ENCODE measurements at regions of chr14 and their contacts with region 1.

Region 1: DNA sequence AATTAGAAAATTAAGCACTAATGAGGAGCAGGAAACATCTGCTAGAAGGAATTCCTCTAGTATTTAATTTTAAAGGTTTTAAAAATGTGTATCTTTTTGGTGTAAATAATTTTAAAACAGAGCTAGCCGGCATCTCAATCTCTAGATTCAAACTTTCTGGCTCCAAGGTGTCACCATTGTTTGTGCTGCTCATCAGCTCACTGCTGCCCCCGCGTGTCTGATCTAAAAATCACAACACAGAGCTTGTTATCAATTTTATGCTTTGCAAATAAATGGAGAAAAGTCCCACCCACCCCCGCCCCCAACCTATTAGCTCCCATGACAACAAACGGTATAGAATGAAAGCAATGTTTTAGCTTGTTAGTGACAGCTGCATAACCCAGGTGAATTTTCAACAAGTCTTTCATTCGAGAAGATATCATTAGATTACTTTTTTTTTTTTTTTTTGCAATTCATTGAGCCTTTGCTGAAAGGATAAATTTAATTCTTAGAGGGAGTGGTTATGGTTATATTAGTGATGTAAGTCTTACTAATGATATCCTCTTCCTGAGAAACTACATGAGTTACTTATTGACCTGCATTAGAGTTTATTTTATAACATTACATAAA is 11.3 kb upstream of the ABHD12B start:
- DNase-seq: peak; percentile 80 to 90 (median 86)
- ATAC-seq: peak; percentile 90
- H3K4me3 ChIP-seq: peak overlapping the region; percentile 84
- H3K4me3 Mint-ChIP-seq: peak overlapping the region; percentile 89 to 95 (median 92)
- H3K27ac ChIP-seq: peak overlapping the region; percentile 56
- H3K27ac Mint-ChIP-seq: peak overlapping the region; percentile 83 to 95 (median 88)
- H3K4me1 ChIP-seq: peaks cover 7% of the 10 kb centered on the region in 2 donors
- H3K4me1 Mint-ChIP-seq: peaks cover 3 to 23% (median 11%) of the 10 kb centered on the region in 7 donors
- H3K27me3 ChIP-seq: no peaks in the 10 kb centered on the region
- H3K27me3 Mint-ChIP-seq: peaks cover 0 to 33% (median 2%) of the 10 kb centered on the region in 5 donors

Region 2: DNA sequence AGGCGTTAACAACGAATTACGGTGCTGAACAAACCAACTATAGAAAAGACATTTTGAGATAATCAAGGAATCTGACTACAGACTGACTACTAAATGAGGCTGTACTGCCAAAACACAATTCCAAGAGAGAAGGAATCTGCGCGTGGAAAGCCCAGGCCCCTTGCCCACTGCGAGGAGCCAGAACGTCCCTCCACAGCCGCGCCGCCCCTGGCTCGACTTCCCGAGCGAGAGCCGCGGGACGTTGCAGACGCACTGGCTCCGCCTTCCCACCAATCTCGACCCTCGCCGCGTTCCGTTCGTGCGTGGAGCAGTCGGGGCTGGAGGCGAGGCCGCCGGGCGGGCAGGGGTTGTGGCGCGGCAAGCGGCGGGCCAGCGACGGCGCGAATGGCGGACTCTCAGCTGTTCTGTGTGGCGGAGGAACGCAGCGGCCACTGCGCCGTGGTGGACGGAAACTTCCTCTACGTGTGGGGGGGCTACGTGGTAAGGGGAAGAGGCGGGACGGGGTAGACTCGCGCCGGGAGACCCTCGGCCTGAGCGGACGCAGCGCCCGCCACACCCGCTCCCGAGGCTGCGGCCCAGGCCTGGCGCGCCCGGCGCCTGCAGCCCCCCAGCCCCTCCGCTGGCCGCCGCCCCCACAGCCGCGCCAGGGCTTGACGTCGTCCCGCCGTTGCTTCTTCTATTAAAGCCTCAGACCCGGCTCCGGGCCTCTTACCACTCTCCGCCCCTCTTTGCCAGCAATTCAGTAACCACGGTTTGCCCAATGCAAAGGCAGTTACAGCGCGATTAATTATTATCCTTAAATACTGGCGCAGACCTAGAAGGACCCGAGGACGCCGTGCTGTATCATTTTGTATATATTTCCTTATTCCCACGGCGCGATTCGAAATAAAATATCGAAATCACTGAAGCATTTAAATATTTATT is 1167.5 kb before region 1 on chr14 and contains the start of gene KLHDC1:
- CTCF ChIA-PET with region 1: no interaction called
- POLR2A ChIA-PET with region 1: no interaction called
- intact Hi-C with region 1: no loop called
- DNase-seq: peak; percentile 70 to 84 (median 80)
- ATAC-seq: peak; percentile 89
- H3K4me3 ChIP-seq: peak within 1 kb of the TSS; percentile 67
- H3K4me3 Mint-ChIP-seq: peak within 1 kb of the TSS; percentile 81 to 100 (median 89)
- H3K27ac ChIP-seq: peak within 1 kb of the TSS; percentile 80
- H3K27ac Mint-ChIP-seq: peak within 1 kb of the TSS; percentile 79 to 99 (median 94)
- H3K4me1 ChIP-seq: peaks cover 8 to 19% of the 10 kb centered on the region in 2 donors
- H3K4me1 Mint-ChIP-seq: peaks cover 20 to 52% (median 43%) of the 10 kb centered on the region in 7 donors
- H3K27me3 ChIP-seq: no peaks in the 10 kb centered on the region
- H3K27me3 Mint-ChIP-seq: no peaks in the 10 kb centered on the region
- total RNA-seq, gene KLHDC1: 2.6 to 18.0 (median 12.2) TPM

Region 3: GRCh38 chr14:50542941-50543418 is 317.6 kb before region 1 on chr14:
- CTCF ChIA-PET with region 1: interaction called, 9 read pairs
- POLR2A ChIA-PET with region 1: no interaction called
- intact Hi-C with region 1: loop called (anchors 1 kb)
- DNase-seq: peak in 7 of 9 donors; percentile 5 to 51 (median 38)
- ATAC-seq: peak; percentile 84
- H3K4me3 ChIP-seq: no peak overlapping the region
- H3K4me3 Mint-ChIP-seq: no peak overlapping the region
- H3K27ac ChIP-seq: no peak overlapping the region
- H3K27ac Mint-ChIP-seq: no peak overlapping the region
- H3K4me1 ChIP-seq: no peaks in the 10 kb centered on the region
- H3K4me1 Mint-ChIP-seq: peaks cover 5 to 13% (median 12%) of the 10 kb centered on the region in 7 donors
- H3K27me3 ChIP-seq: no peaks in the 10 kb centered on the region
- H3K27me3 Mint-ChIP-seq: peaks cover 0 to 7% (median 0%) of the 10 kb centered on the region in 5 donors

Region 4: DNA sequence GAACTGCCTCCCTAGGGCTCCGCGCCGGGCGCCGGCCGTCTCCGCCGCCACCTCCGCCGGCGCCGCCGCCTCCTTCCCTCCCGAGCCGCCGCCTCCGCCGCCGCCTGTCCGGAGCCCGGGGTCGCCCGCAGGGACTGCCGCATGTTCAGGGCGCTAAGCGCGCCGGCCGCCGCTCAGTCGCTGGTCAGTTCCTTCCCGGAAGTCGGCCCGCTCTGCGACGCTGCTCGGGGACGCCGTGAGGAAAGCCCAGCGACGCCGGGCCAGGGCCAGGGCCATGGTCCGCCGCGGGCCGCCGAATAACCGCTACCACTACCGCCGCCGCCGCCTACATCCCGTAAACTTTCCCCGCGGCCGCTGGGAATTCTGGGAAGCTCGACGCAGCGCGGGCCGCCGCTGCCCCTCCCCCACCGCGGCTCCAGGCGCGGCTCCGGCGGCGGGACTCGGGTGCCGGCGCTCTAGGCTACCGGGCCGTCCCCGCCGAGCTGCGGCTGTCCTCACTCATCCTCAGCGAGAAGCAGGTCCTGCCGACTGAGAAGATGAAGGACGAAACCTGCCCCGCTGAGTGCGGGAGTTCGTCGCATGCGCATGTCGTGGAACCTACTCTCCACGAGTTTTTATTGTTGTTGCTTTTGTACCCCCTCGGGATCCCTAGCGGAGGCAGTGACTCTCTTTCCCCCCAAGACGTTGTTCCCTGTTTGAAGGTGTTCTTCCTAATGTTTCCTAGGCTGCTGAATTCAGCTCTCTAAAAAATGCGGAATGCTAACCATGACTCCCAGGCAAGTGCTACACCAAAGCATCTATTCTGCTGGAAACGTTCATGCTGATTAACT is 192.4 kb before region 1 on chr14 and contains the start of gene SAV1:
- CTCF ChIA-PET with region 1: no interaction called
- POLR2A ChIA-PET with region 1: no interaction called
- intact Hi-C with region 1: loop called in 1 of 2 experiments (anchors 5 kb)
- DNase-seq: peak; percentile 18 to 65 (median 35)
- ATAC-seq: peak; percentile 59
- H3K4me3 ChIP-seq: peak within 1 kb of the TSS; percentile 84
- H3K4me3 Mint-ChIP-seq: peak within 1 kb of the TSS in 2 of 10 donors; percentile 92 to 95
- H3K27ac ChIP-seq: peak within 1 kb of the TSS; percentile 65
- H3K27ac Mint-ChIP-seq: peak within 1 kb of the TSS in 6 of 9 donors; percentile 54 to 94 (median 88)
- H3K4me1 ChIP-seq: peaks cover 0 to 10% of the 10 kb centered on the region in 2 donors
- H3K4me1 Mint-ChIP-seq: peaks cover 11 to 23% (median 20%) of the 10 kb centered on the region in 7 donors
- H3K27me3 ChIP-seq: no peaks in the 10 kb centered on the region
- H3K27me3 Mint-ChIP-seq: peaks cover 0 to 7% (median 0%) of the 10 kb centered on the region in 5 donors
- total RNA-seq, gene SAV1: 7.2 to 9.4 (median 8.7) TPM

Region 5: GRCh38 chr14:50778721-50779483 is 81.7 kb before region 1 on chr14:
- CTCF ChIA-PET with region 1: interaction called, 110 read pairs
- POLR2A ChIA-PET with region 1: interaction called, 22 read pairs
- intact Hi-C with region 1: loop called (anchors 1 kb)
- DNase-seq: no peak
- ATAC-seq: no peak
- H3K4me3 ChIP-seq: no peak overlapping the region
- H3K4me3 Mint-ChIP-seq: peak overlapping the region in 4 of 10 donors; percentile 39 to 63 (median 50)
- H3K27ac ChIP-seq: no peak overlapping the region
- H3K27ac Mint-ChIP-seq: peak overlapping the region in 8 of 9 donors; percentile 61 to 97 (median 88)
- H3K4me1 ChIP-seq: peaks cover 31 to 32% of the 10 kb centered on the region in 2 donors
- H3K4me1 Mint-ChIP-seq: peaks cover 26 to 76% (median 66%) of the 10 kb centered on the region in 7 donors
- H3K27me3 ChIP-seq: no peaks in the 10 kb centered on the region
- H3K27me3 Mint-ChIP-seq: no peaks in the 10 kb centered on the region

Region 6: DNA sequence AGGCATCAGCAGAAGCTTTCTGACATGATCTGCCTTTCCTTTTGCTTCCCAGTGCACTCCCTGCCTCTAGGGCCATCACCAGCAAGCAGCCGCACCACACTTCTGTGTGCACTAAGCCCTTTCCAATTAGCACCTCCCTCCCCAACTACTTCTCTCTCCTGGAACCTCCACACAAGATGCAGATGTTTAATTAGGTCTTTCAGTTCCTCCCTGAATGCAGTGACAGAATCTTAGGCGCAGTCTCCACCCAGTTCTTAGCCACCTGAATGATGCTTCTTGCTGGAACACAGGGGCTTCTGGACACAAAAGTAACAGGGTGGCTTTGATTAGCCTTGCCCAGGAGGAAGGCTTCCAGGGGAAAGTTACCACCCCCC is 62.5 kb before region 1 on chr14:
- CTCF ChIA-PET with region 1: interaction called, 85 read pairs
- POLR2A ChIA-PET with region 1: interaction called, 4 read pairs
- intact Hi-C with region 1: no loop called
- DNase-seq: no peak
- ATAC-seq: no peak
- H3K4me3 ChIP-seq: no peak overlapping the region
- H3K4me3 Mint-ChIP-seq: peak overlapping the region in 2 of 10 donors; percentile 15 to 39
- H3K27ac ChIP-seq: no peak overlapping the region
- H3K27ac Mint-ChIP-seq: peak overlapping the region in 8 of 9 donors; percentile 26 to 98 (median 74)
- H3K4me1 ChIP-seq: peaks cover 19 to 22% of the 10 kb centered on the region in 2 donors
- H3K4me1 Mint-ChIP-seq: peaks cover 19 to 78% (median 64%) of the 10 kb centered on the region in 7 donors
- H3K27me3 ChIP-seq: no peaks in the 10 kb centered on the region
- H3K27me3 Mint-ChIP-seq: no peaks in the 10 kb centered on the region

Region 7: GRCh38 chr14:50830932-50831725 is 29.5 kb before region 1 on chr14 and contains the start of gene NIN:
- CTCF ChIA-PET with region 1: interaction called, 31 read pairs
- POLR2A ChIA-PET with region 1: interaction called, 67 read pairs
- intact Hi-C with region 1: loop called (anchors 1 kb)
- DNase-seq: peak; percentile 58 to 80 (median 74)
- ATAC-seq: peak; percentile 91
- H3K4me3 ChIP-seq: peak within 1 kb of the TSS; percentile 80
- H3K4me3 Mint-ChIP-seq: peak within 1 kb of the TSS; percentile 91 to 99 (median 96)
- H3K27ac ChIP-seq: peak within 1 kb of the TSS; percentile 84
- H3K27ac Mint-ChIP-seq: peak within 1 kb of the TSS; percentile 85 to 99 (median 95)
- H3K4me1 ChIP-seq: peaks cover 40 to 42% of the 10 kb centered on the region in 2 donors
- H3K4me1 Mint-ChIP-seq: peaks cover 46 to 84% (median 74%) of the 10 kb centered on the region in 7 donors
- H3K27me3 ChIP-seq: no peaks in the 10 kb centered on the region
- H3K27me3 Mint-ChIP-seq: peaks cover 0 to 13% (median 0%) of the 10 kb centered on the region in 5 donors
- total RNA-seq, gene NIN: 84.5 to 149 (median 128) TPM

Region 8: GRCh38 chr14:50892255-50892654 is 31.7 kb after region 1 on chr14:
- CTCF ChIA-PET with region 1: no interaction called
- POLR2A ChIA-PET with region 1: no interaction called
- intact Hi-C with region 1: no loop called
- DNase-seq: no peak
- ATAC-seq: no peak
- H3K4me3 ChIP-seq: no peak overlapping the region
- H3K4me3 Mint-ChIP-seq: no peak overlapping the region
- H3K27ac ChIP-seq: no peak overlapping the region
- H3K27ac Mint-ChIP-seq: no peak overlapping the region
- H3K4me1 ChIP-seq: no peaks in the 10 kb centered on the region
- H3K4me1 Mint-ChIP-seq: no peaks in the 10 kb centered on the region
- H3K27me3 ChIP-seq: no peaks in the 10 kb centered on the region
- H3K27me3 Mint-ChIP-seq: peaks cover under 1 to 16% (median 10%) of the 10 kb centered on the region in 5 donors